Ascending aorta (tissue), 2 donors: ENCODE measurements at regions of chr6 and their contacts with region 1.

Region 1: GRCh38 chr6:56542364-56543331 is 100.0 kb downstream of the DST start:
- DNase-seq: peak; percentile 93 to 98
- H3K4me3 ChIP-seq: peak overlapping the region; percentile 53 to 84
- H3K27ac ChIP-seq: peak overlapping the region; percentile 94 to 96
- H3K4me1 ChIP-seq: peaks cover 3 to 27% of the 10 kb centered on the region in 2 donors
- H3K27me3 ChIP-seq: no peaks in the 10 kb centered on the region
- CTCF ChIP-seq: peak; percentile 21 to 48 (median 38)

Region 2: DNA sequence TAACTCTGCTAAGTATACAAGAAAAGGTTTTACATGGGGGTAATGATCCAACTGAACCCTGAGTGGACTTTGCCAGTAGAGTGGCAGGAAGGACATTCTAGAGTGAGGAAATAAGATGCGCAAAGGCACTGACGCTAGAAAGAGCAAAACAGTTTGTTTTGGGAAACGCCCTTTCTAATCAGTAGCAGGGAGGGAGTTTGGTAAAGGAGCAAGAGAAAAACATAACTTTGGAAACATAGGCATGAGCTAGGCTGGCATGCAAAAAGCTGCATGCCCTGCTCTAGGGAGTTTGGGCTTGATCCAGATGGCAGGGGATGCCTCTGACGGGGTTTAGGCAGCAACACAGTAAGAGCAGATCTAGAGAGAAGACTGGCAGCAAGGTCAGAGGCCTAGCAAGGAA is 35.1 kb before region 1 on chr6:
- intact Hi-C with region 1: loop called (anchors 5 kb)
- DNase-seq: no peak
- H3K4me3 ChIP-seq: no peak overlapping the region
- H3K27ac ChIP-seq: peak overlapping the region; percentile 65 to 82
- H3K4me1 ChIP-seq: peaks cover 0 to 33% of the 10 kb centered on the region in 2 donors
- H3K27me3 ChIP-seq: no peaks in the 10 kb centered on the region
- CTCF ChIP-seq: no peak

Region 3: GRCh38 chr6:56524891-56525703 is 17.6 kb before region 1 on chr6:
- intact Hi-C with region 1: loop called (anchors 2 kb)
- DNase-seq: no peak
- H3K4me3 ChIP-seq: peak overlapping the region; percentile 11 to 12
- H3K27ac ChIP-seq: peak overlapping the region; percentile 78 to 82
- H3K4me1 ChIP-seq: peaks cover 0 to 49% of the 10 kb centered on the region in 2 donors
- H3K27me3 ChIP-seq: no peaks in the 10 kb centered on the region
- CTCF ChIP-seq: no peak

Region 4: GRCh38 chr6:56570413-56571359 is 28.0 kb after region 1 on chr6:
- intact Hi-C with region 1: loop called (anchors 2 kb)
- DNase-seq: no peak
- H3K4me3 ChIP-seq: no peak overlapping the region
- H3K27ac ChIP-seq: no peak overlapping the region
- H3K4me1 ChIP-seq: peaks cover 0 to 5% of the 10 kb centered on the region in 2 donors
- H3K27me3 ChIP-seq: no peaks in the 10 kb centered on the region
- CTCF ChIP-seq: peak; percentile 24 to 64 (median 52)